ENCODE measurements at regions of chr2 and their contacts with region 1.

Region 1: DNA sequence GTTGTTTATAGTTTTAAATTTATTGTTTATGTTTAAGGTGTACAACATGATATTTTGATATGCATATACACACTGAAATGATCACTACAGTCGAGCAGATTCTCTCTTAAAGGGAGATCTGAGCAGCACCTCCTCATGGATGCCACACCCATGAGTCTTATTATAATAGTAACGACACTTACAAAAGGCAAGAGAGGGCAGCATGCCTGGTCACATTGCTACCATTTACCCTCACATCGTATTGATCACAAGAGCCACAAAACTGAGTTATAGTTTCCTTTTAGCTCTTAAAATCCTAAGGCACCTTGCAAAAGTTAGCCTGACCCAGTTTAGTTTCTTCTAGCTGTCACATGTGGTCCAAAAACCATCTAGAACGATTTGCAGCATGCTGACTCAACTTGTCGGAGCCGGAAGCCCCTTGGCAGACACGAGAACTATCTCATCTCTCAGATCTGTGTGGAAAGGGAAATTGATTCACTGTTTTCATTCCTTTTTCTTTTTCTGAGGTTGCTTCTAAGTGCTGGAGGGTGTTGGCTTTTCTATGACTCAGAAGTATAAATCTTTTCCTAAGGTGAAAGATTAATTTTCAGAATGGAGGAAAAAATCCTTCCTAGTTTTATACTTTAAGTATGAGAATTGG is 85.3 kb downstream of the CDC42EP3 start:
- DNase-seq: peak; percentile 84
- ATAC-seq: peak; percentile 76
- H3K4me3 Mint-ChIP-seq: peak overlapping the region; percentile 40
- H3K27ac Mint-ChIP-seq: peak overlapping the region; percentile 85
- H3K4me1 Mint-ChIP-seq: peaks cover 91% of the 10 kb centered on the region
- H3K27me3 Mint-ChIP-seq: no peaks in the 10 kb centered on the region
- CTCF ChIP-seq: no peak

Region 2: DNA sequence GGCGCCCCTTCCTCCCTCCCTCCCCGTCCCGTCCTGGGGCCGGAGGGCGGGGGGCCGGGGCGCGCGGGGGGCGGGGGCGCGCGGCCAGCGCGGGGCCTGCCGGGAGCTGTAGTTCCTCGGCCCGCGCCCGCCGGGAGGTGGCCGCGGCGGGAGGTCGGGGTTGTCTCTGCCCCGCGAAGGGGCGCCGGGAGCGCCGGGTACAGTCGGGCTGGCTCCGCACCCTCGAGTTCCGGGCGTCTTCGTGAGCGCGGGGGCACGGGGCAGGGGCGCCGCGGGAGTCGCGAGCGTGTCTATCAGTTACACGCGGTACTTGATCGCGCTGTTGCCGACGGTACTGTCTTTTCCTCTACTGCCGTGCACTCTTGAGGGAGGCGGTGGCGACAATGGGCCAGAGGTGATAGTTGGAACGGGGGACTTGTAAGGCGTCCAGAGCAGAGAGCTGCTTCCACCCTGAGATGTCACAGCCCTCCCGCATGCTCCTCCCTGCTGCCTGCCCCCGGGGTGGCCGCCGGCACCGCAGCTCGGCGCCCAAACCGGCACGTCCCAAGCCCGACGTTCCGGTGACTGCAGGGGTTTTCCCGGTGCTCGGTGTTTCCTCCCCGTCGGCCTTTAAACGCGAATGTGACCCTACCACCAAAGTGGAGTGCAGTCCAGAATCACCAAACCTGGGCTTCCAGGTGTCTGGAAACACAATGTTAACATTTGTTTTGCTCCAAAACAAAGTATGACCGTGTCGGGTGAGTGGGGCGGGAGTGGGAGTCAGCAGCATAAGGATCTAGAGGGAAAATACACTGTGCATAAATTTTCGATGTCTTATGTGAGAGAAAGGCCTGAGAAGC is 261.1 kb before region 1 on chr2 and contains the start of gene PRKD3:
- CTCF ChIA-PET with region 1: no interaction called
- POLR2A ChIA-PET with region 1: no interaction called
- intact Hi-C with region 1: no loop called
- DNase-seq: peak; percentile 65
- ATAC-seq: peak; percentile 81
- H3K4me3 Mint-ChIP-seq: peak within 1 kb of the TSS; percentile 93
- H3K27ac Mint-ChIP-seq: peak within 1 kb of the TSS; percentile 94
- H3K4me1 Mint-ChIP-seq: peaks cover 29% of the 10 kb centered on the region
- H3K27me3 Mint-ChIP-seq: peaks cover 11% of the 10 kb centered on the region
- CTCF ChIP-seq: no peak
- total RNA-seq, gene PRKD3: 23.8 to 25.6 TPM

Region 3: GRCh38 chr2:37464067-37464466 is 122.0 kb before region 1 on chr2:
- CTCF ChIA-PET with region 1: no interaction called
- POLR2A ChIA-PET with region 1: no interaction called
- intact Hi-C with region 1: no loop called
- DNase-seq: no peak
- ATAC-seq: no peak
- H3K4me3 Mint-ChIP-seq: no peak overlapping the region
- H3K27ac Mint-ChIP-seq: no peak overlapping the region
- H3K4me1 Mint-ChIP-seq: peaks cover 19% of the 10 kb centered on the region
- H3K27me3 Mint-ChIP-seq: no peaks in the 10 kb centered on the region
- CTCF ChIP-seq: no peak

Region 4: GRCh38 chr2:37600735-37601134 is 14.6 kb after region 1 on chr2:
- CTCF ChIA-PET with region 1: interaction called, 5 read pairs
- POLR2A ChIA-PET with region 1: interaction called, 10 read pairs
- intact Hi-C with region 1: no loop called
- DNase-seq: no peak
- ATAC-seq: peak; percentile 48
- H3K4me3 Mint-ChIP-seq: peak overlapping the region; percentile 71
- H3K27ac Mint-ChIP-seq: peak overlapping the region; percentile 92
- H3K4me1 Mint-ChIP-seq: peaks cover 52% of the 10 kb centered on the region
- H3K27me3 Mint-ChIP-seq: no peaks in the 10 kb centered on the region
- CTCF ChIP-seq: no peak

Region 5: GRCh38 chr2:37623971-37624900 is 38.1 kb after region 1 on chr2:
- CTCF ChIA-PET with region 1: interaction called, 14 read pairs
- POLR2A ChIA-PET with region 1: interaction called, 28 read pairs
- intact Hi-C with region 1: loop called (anchors 2 kb)
- DNase-seq: peak; percentile 61
- ATAC-seq: peak; percentile 82
- H3K4me3 Mint-ChIP-seq: peak overlapping the region; percentile 41
- H3K27ac Mint-ChIP-seq: peak overlapping the region; percentile 87
- H3K4me1 Mint-ChIP-seq: peaks cover 85% of the 10 kb centered on the region
- H3K27me3 Mint-ChIP-seq: no peaks in the 10 kb centered on the region
- CTCF ChIP-seq: no peak

Measured in activated CD8-positive, alpha-beta T cell treated with anti-CD3 and anti-CD28 coated beads for 36 hours (primary cell).